ENCODE measurements at regions of chr12 and their contacts with region 1.

Region 1: GRCh38 chr12:51871126-51871525 is 16.8 kb upstream of the ANKRD33 start:
- DNase-seq: no peak
- ATAC-seq: no peak
- H3K4me3 ChIP-seq: no peak overlapping the region
- H3K27ac ChIP-seq: no peak overlapping the region
- H3K4me1 ChIP-seq: no peaks in the 10 kb centered on the region
- H3K27me3 ChIP-seq: no peaks in the 10 kb centered on the region
- CTCF ChIP-seq: no peak

Region 2: GRCh38 chr12:51403681-51404136 is 467.4 kb before region 1 on chr12:
- CTCF ChIA-PET with region 1: no interaction called
- POLR2A ChIA-PET with region 1: no interaction called
- intact Hi-C with region 1: no loop called
- DNase-seq: no peak
- ATAC-seq: no peak
- H3K4me3 ChIP-seq: no peak overlapping the region
- H3K27ac ChIP-seq: no peak overlapping the region
- H3K4me1 ChIP-seq: no peaks in the 10 kb centered on the region; the same call in 1 of the 2 replicates
- H3K27me3 ChIP-seq: no peaks in the 10 kb centered on the region
- CTCF ChIP-seq: no peak

Region 3: DNA sequence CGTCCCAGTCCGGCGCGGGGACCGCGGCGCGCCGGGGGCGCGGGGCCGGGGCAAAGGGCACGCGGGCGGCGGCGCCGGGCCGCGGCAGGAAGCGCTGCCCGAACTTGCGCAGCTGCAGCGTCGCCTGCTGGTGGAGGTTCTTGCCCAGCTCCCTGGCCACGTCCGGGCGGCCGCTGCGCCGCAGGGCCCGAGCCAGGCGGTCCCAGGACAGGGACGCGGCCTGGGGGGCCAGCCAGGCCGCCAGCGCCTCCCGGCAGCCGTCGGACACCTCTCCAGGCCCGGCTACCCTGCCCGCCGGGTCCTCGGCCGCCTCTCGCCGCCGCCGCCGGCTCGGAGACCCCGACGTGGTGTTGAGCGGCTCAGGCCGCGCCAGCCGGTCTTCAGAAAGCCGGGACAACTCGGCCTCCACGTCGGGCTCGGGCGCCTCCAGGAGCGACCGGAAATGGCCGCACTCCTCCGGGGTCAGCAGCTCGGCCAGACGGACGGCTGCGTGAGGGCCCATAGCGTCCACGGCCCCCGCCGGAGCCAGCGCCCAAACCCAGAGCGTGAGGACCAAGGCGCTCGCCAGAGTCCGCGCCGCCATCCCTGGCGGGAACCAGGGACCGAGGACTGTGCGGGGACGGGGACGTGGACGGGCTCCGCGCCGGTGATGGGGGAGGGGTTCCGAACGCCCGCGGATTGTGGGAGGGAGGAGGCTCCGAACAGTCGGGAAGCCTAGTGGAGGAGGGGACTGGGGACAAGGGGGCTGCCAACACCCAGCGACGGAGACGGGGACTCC is 56.6 kb before region 1 on chr12:
- CTCF ChIA-PET with region 1: interaction called, 5 read pairs
- POLR2A ChIA-PET with region 1: no interaction called
- intact Hi-C with region 1: loop called (anchors 1 kb)
- DNase-seq: peak; percentile 78
- ATAC-seq: peak; percentile 92
- H3K4me3 ChIP-seq: peak overlapping the region; percentile 87
- H3K27ac ChIP-seq: 0 out of 2 replicates have a peak overlapping the region, but pooled peaks have one; percentile 20
- H3K4me1 ChIP-seq: peaks cover 16% of the 10 kb centered on the region; the same call in 1 of the 2 replicates
- H3K27me3 ChIP-seq: no peaks in the 10 kb centered on the region
- CTCF ChIP-seq: peak; percentile 43

Measured in PC-3 (cell line).